Heart left ventricle (tissue), 16 donors: ENCODE measurements at regions of chr15 and their contacts with region 1.

Region 1: GRCh38 chr15:44426975-44427755 is at the start of gene CTDSPL2:
- DNase-seq: peak; percentile 98 to 99 (median 99)
- ATAC-seq: peak; percentile 98 to 99 (median 98)
- H3K4me3 ChIP-seq: peak within 1 kb of the TSS; percentile 61 to 96 (median 84)
- H3K27ac ChIP-seq: peak within 1 kb of the TSS; percentile 90 to 99 (median 96)
- H3K4me1 ChIP-seq: peaks cover 6 to 40% (median 22%) of the 10 kb centered on the region in 12 donors
- H3K27me3 ChIP-seq: no peaks in the 10 kb centered on the region
- CTCF ChIP-seq: peak in 11 of 12 donors; percentile 14 to 67 (median 39)
- POLR2A ChIP-seq: peak in 1 of 2 donors; percentile 59
- total RNA-seq, gene CTDSPL2: 16.5 to 27.6 (median 19.8) TPM

Region 2: GRCh38 chr15:43791993-43792760 is 635.0 kb before region 1 on chr15 and contains the start of gene SERF2:
- intact Hi-C with region 1: loop called in 1 of 10 experiments (anchors 5 kb)
- DNase-seq: peak; percentile 100
- ATAC-seq: peak; percentile 96 to 98 (median 97)
- H3K4me3 ChIP-seq: peak within 1 kb of the TSS; percentile 60 to 100 (median 85)
- H3K27ac ChIP-seq: peak within 1 kb of the TSS; percentile 86 to 100 (median 96)
- H3K4me1 ChIP-seq: peaks cover 4 to 50% (median 36%) of the 10 kb centered on the region in 12 donors
- H3K27me3 ChIP-seq: no peaks in the 10 kb centered on the region
- CTCF ChIP-seq: no peak
- POLR2A ChIP-seq: peak; percentile 98
- total RNA-seq, gene SERF2: 705 to 1,199 (median 843) TPM

Region 3: GRCh38 chr15:44286814-44287452 is 140.2 kb before region 1 on chr15:
- intact Hi-C with region 1: loop called in 5 of 10 experiments (anchors 1 to 10 kb)
- DNase-seq: no peak
- ATAC-seq: no peak
- H3K4me3 ChIP-seq: peak overlapping the region in 10 of 12 donors; percentile 69 to 98 (median 92)
- H3K27ac ChIP-seq: peak overlapping the region in 5 of 12 donors; percentile 88 to 95 (median 93)
- H3K4me1 ChIP-seq: peaks cover 0 to 34% (median 23%) of the 10 kb centered on the region in 12 donors
- H3K27me3 ChIP-seq: peaks cover 0 to 4% (median 0%) of the 10 kb centered on the region in 9 donors
- CTCF ChIP-seq: peak in 4 of 12 donors; percentile 2 to 40 (median 32)
- POLR2A ChIP-seq: no peak

Region 4: DNA sequence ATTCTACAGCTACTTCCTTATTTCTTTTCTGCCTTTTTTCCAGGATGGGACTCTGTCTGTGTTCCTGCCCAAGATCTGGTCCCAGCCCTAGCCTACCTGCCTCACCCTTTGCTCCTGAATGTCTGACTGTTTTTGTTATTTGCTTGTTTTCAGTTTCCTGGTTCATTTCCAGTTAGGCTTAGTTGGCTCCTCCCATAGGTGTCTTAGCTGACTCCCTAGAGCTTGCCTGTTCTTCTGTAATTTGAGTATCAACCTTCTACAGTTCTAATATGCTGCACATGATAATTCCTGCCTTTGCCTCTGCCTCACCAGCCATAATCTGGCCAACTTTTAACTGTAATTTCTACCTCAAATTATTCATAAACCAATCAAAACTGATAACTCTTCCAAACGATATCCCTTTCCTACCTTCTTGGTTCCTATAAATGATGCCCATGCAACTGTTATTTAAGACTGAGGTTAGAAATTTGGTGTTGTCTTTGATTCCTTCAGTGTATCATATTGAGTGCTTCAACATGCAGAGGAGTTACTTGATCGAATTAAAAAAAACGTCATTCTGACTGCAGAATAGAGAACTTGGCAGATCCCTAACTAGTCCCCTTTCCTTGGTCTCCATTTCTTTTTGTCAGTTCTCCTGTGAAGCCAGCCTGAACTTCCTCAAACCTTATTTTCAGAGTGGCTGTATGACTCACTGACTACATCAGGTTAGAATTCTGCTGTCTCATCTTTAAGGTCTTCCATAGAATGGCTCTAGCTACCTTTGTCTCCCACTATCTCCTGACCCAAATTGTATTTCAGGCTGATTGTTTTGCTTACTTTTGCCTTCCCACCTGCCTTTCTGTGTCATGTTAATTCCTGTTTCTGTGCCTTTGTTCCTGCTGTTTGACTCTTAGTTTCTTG is 130.3 kb before region 1 on chr15:
- intact Hi-C with region 1: loop called in 1 of 10 experiments (anchors 10 kb)
- DNase-seq: no peak
- ATAC-seq: peak in 3 of 4 donors; percentile 45 to 66 (median 58)
- H3K4me3 ChIP-seq: no peak overlapping the region
- H3K27ac ChIP-seq: peak overlapping the region in 1 of 12 donors; percentile 33
- H3K4me1 ChIP-seq: peaks cover 0 to 43% (median 8%) of the 10 kb centered on the region in 12 donors
- H3K27me3 ChIP-seq: no peaks in the 10 kb centered on the region
- CTCF ChIP-seq: no peak
- POLR2A ChIP-seq: no peak

Region 5: GRCh38 chr15:44536962-44537734 is 110.0 kb after region 1 on chr15 and contains the start of gene EIF3J:
- intact Hi-C with region 1: loop called in 3 of 10 experiments (anchors 2 to 10 kb)
- DNase-seq: peak; percentile 96 to 97 (median 97)
- ATAC-seq: peak; percentile 93 to 97 (median 94)
- H3K4me3 ChIP-seq: peak within 1 kb of the TSS; percentile 66 to 99 (median 94)
- H3K27ac ChIP-seq: peak within 1 kb of the TSS; percentile 83 to 99 (median 97)
- H3K4me1 ChIP-seq: peaks cover 5 to 46% (median 33%) of the 10 kb centered on the region in 12 donors
- H3K27me3 ChIP-seq: no peaks in the 10 kb centered on the region
- CTCF ChIP-seq: no peak
- POLR2A ChIP-seq: peak in 1 of 2 donors; percentile 55
- total RNA-seq, gene EIF3J: 30.4 to 116 (median 71.6) TPM

Region 6: DNA sequence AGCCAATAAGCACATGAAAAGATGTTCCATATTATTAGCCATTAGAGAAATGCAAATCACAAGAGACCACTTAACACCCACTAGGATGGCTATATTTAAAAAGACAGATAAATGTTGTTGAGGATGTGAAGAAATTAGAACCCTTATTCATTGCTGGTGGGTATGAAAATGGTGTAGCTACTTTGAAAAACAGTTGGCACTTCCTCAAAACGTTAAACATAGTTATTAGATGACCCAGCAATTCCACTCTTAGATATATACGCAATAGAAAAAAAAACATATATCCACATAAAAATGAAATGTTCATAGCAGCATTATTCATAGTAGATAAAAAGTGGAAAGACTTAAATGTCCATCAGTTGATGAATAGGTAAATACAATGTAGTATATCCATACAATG is 482.3 kb after region 1 on chr15:
- intact Hi-C with region 1: no loop called
- DNase-seq: no peak
- ATAC-seq: no peak
- H3K4me3 ChIP-seq: no peak overlapping the region
- H3K27ac ChIP-seq: no peak overlapping the region
- H3K4me1 ChIP-seq: no peaks in the 10 kb centered on the region
- H3K27me3 ChIP-seq: peaks cover 0 to 6% (median 0%) of the 10 kb centered on the region in 9 donors
- CTCF ChIP-seq: no peak
- POLR2A ChIP-seq: no peak